ENCODE measurements at regions of chr19 and their contacts with region 1.

Region 1: DNA sequence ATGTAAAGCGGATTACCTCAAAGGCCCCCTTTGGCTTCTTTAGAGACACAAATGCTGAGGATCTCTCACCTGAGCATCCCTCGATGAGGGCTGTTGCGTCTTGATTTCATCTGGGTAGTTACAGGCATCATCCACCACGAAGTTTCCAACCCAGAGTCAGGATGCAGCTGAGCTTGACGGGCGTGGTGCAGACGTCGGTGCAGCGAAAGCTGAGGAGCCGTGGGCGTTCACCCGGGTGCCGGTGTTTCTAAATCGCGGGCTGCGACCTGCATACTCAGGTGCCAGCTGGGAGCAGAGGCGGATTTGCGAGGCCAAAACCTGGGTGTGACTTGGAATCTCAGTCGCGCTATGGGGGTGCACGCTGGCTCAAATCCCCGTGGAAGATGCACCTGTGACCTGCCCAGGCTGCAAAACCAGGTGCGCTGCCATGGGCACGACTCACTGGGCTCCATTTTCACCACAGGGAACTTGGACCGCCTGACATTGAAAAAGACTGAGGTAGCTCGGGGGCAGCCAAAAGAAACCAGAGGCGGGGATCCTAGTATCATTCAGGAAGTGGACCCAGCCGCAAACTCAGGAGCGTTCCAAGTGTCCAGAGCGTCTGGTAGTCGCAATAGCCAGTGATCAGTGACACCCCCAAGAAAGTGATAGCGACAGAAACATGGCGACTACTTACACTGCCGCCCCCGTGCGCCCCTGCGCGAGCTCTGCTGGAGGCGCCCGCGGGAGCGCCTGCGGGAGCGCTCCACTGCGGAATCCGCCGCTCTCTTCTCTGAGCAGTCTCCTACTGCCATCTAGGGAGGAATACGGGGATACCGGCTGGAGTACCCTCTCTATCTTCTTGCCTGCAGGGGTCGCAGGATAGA is 36.4 kb upstream of the IGFL4 start:
- DNase-seq: no peak
- ATAC-seq: peak in 7 of 8 donors; percentile 47 to 70 (median 53)
- H3K4me3 ChIP-seq: peak overlapping the region in 1 of 10 donors; percentile 7
- H3K27ac ChIP-seq: no peak overlapping the region
- H3K4me1 ChIP-seq: peaks cover 0 to 8% (median 4%) of the 10 kb centered on the region in 9 donors
- H3K27me3 ChIP-seq: peaks cover 20 to 94% (median 86%) of the 10 kb centered on the region in 7 donors
- CTCF ChIP-seq: peak in 8 of 9 donors; percentile 8 to 72 (median 62)

Region 2: DNA sequence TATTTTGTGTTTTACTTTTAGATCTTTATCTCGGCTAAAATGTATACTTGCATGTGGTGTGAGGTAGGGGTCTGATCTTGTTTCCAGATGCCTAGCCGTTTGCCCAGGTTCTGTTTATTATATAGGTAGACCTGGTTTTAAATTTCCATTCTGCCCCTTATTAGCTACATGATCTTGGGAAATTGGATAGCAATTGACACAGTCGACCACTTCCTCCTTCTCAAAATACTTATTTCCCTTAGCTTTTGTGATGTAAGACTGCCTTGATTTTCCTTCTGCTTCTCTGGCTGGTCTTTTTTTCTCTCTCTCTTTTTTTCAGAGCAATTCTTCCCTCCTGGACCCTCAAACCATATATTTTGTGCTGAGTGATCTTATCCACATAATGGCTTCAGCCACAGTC is 51.3 kb before region 1 on chr19:
- intact Hi-C with region 1: loop called in 1 of 10 experiments (anchors 5 kb)
- DNase-seq: no peak
- ATAC-seq: no peak
- H3K4me3 ChIP-seq: no peak overlapping the region
- H3K27ac ChIP-seq: no peak overlapping the region
- H3K4me1 ChIP-seq: peaks cover 0 to 14% (median 0%) of the 10 kb centered on the region in 9 donors
- H3K27me3 ChIP-seq: peaks cover 0 to 73% (median 60%) of the 10 kb centered on the region in 7 donors
- CTCF ChIP-seq: no peak

Region 3: GRCh38 chr19:46186101-46187100 is 109.2 kb after region 1 on chr19:
- intact Hi-C with region 1: loop called (anchors 1 to 10 kb)
- DNase-seq: no peak
- ATAC-seq: no peak
- H3K4me3 ChIP-seq: no peak overlapping the region
- H3K27ac ChIP-seq: no peak overlapping the region
- H3K4me1 ChIP-seq: no peaks in the 10 kb centered on the region
- H3K27me3 ChIP-seq: peaks cover 0 to 58% (median 33%) of the 10 kb centered on the region in 7 donors
- CTCF ChIP-seq: no peak

Region 4: GRCh38 chr19:46192992-46193650 is 115.9 kb after region 1 on chr19:
- intact Hi-C with region 1: loop called (anchors 1 to 10 kb)
- DNase-seq: no peak
- ATAC-seq: peak in 1 of 8 donors; percentile 73
- H3K4me3 ChIP-seq: no peak overlapping the region
- H3K27ac ChIP-seq: peak overlapping the region in 1 of 10 donors; percentile 60
- H3K4me1 ChIP-seq: peaks cover 0 to 20% (median 0%) of the 10 kb centered on the region in 9 donors
- H3K27me3 ChIP-seq: peaks cover 0 to 85% (median 55%) of the 10 kb centered on the region in 7 donors
- CTCF ChIP-seq: no peak

Region 5: GRCh38 chr19:46265217-46265828 is 188.1 kb after region 1 on chr19:
- intact Hi-C with region 1: loop called (anchors 2 to 5 kb)
- DNase-seq: peak in 1 of 2 donors; percentile 67
- ATAC-seq: peak; percentile 71 to 88 (median 78)
- H3K4me3 ChIP-seq: no peak overlapping the region
- H3K27ac ChIP-seq: no peak overlapping the region
- H3K4me1 ChIP-seq: no peaks in the 10 kb centered on the region
- H3K27me3 ChIP-seq: peaks cover 0 to 76% (median 40%) of the 10 kb centered on the region in 7 donors
- CTCF ChIP-seq: peak; percentile 63 to 87 (median 83)